Mammary epithelial cell (primary cell): ENCODE measurements at regions of chr15 and their contacts with region 1.

Region 1: GRCh38 chr15:52697051-52697450 is 17.9 kb upstream of the ATOSA start:
- DNase-seq: no peak
- H3K4me3 ChIP-seq: no peak overlapping the region
- H3K27ac ChIP-seq: no peak overlapping the region
- H3K4me1 ChIP-seq: no peaks in the 10 kb centered on the region
- H3K27me3 ChIP-seq: no peaks in the 10 kb centered on the region
- CTCF ChIP-seq: no peak

Region 2: GRCh38 chr15:52710050-52710707 is 13.1 kb after region 1 on chr15:
- CTCF ChIA-PET with region 1: no interaction called
- dilution Hi-C with region 1: no loop called
- in situ Hi-C with region 1: no loop called
- intact Hi-C with region 1: loop called (anchors 2 kb)
- DNase-seq: peak; percentile 40
- H3K4me3 ChIP-seq: no peak overlapping the region
- H3K27ac ChIP-seq: no peak overlapping the region
- H3K4me1 ChIP-seq: peaks cover 4% of the 10 kb centered on the region
- H3K27me3 ChIP-seq: no peaks in the 10 kb centered on the region
- CTCF ChIP-seq: no peak